ENCODE measurements at regions of chr6 and their contacts with region 1.

Region 1: DNA sequence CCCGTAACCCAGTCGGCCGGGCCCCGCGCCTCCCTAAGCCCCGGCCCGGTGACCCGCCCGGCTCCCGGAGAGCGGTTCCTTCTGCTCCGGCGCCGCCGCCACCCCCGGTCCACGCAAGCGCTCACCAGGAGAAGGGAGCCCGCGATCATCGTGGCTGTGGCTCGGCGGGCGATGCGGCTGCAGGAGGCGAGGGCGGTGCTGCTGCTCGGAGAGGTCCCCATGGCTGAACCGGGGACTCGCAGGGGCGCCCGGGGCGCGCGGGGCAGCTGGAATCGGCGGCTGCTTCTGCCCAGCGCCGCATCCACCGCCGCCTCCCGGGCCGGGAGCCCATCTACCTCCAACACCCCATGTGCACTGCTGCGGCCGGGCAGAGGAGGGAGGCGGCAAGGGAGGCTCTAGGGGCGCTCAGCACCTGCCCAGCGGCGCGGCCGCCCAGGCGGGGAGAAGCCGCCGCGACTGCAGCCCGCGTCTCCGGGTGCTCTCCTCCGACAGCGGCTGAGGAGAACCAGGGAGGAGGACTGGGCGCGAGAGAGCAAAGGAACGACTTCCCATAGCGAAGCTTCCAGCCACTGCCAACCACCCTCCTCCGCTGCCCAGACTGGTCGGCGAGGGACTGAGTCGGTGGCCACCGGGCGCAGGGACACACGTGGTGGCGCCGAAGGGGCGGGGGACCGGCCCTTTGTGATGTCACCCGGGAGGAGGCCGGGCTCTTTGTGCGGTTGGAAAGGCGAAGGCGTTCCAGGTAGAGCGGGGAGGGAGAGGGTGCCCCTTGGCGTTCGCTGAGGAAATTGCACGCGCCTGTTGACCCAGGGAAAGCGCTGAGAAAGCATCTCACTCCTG is at the start of gene TNFRSF21:
- DNase-seq: peak; percentile 36 to 81 (median 70)
- ATAC-seq: peak; percentile 92
- H3K4me3 ChIP-seq: peak within 1 kb of the TSS; percentile 48 to 76
- H3K4me3 Mint-ChIP-seq: peak within 1 kb of the TSS; percentile 80
- H3K27ac ChIP-seq: no peak within 1 kb of the TSS
- H3K27ac Mint-ChIP-seq: no peak within 1 kb of the TSS
- H3K4me1 ChIP-seq: peaks cover 6% of the 10 kb centered on the region
- H3K4me1 Mint-ChIP-seq: peaks cover 10% of the 10 kb centered on the region
- H3K27me3 ChIP-seq: peaks cover 7 to 10% of the 10 kb centered on the region in 2 experiments
- H3K27me3 Mint-ChIP-seq: peaks cover 44% of the 10 kb centered on the region
- CTCF ChIP-seq: peak; percentile 64
- total RNA-seq, gene TNFRSF21: 0.42 to 0.52 TPM

Region 2: GRCh38 chr6:46419576-46420002 is 889.9 kb before region 1 on chr6:
- CTCF ChIA-PET with region 1: no interaction called
- POLR2A ChIA-PET with region 1: no interaction called
- intact Hi-C with region 1: loop called in 1 of 2 experiments (anchors 5 kb)
- DNase-seq: peak in 2 of 9 experiments; percentile 30 to 46
- ATAC-seq: no peak
- H3K4me3 ChIP-seq: no peak overlapping the region
- H3K4me3 Mint-ChIP-seq: no peak overlapping the region
- H3K27ac ChIP-seq: no peak overlapping the region
- H3K27ac Mint-ChIP-seq: no peak overlapping the region
- H3K4me1 ChIP-seq: no peaks in the 10 kb centered on the region
- H3K4me1 Mint-ChIP-seq: no peaks in the 10 kb centered on the region
- H3K27me3 ChIP-seq: no peaks in the 10 kb centered on the region
- H3K27me3 Mint-ChIP-seq: peaks cover 19% of the 10 kb centered on the region
- CTCF ChIP-seq: peak; percentile 31

Region 3: DNA sequence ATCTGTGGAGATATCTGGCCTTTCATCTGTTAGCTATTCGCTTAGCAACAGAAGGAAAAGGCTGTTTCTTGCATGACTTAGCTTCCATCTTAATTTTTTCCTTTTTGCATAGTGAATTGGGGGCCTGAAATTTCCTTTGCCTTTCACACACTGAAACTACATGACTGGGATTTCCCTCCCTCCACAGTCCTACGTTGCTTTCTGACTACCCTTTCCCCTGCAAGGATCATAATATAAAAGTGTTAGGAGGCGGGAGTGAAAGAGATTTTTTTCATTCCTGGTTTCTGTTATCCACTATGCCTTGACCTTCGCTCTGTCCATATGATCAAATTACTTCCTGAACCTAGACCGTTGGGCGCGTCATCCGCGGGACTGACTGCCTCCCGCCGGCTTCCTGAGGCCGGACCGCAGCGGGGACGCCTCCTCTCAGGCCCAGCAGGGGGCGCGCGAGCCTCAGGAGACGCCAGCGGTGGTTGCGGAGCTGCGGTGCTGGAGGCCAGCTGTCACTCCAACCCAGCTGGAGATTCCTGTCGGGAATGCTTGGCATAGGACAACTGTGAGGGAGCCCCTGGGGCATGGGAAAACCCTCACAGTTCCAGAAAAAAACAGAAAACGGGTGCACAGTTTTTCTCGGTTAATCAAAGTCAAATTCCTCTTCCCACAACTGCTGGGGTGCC is 460.7 kb before region 1 on chr6:
- CTCF ChIA-PET with region 1: no interaction called
- POLR2A ChIA-PET with region 1: no interaction called
- intact Hi-C with region 1: loop called in 1 of 2 experiments (anchors 1 kb)
- DNase-seq: peak in 8 of 9 experiments; percentile 22 to 70 (median 56)
- ATAC-seq: no peak
- H3K4me3 ChIP-seq: no peak overlapping the region
- H3K4me3 Mint-ChIP-seq: peak overlapping the region; percentile 56
- H3K27ac ChIP-seq: no peak overlapping the region
- H3K27ac Mint-ChIP-seq: no peak overlapping the region
- H3K4me1 ChIP-seq: no peaks in the 10 kb centered on the region
- H3K4me1 Mint-ChIP-seq: peaks cover 4% of the 10 kb centered on the region
- H3K27me3 ChIP-seq: peaks cover 0 to 2% of the 10 kb centered on the region in 2 experiments
- H3K27me3 Mint-ChIP-seq: peaks cover 22% of the 10 kb centered on the region
- CTCF ChIP-seq: peak; percentile 67

Region 4: DNA sequence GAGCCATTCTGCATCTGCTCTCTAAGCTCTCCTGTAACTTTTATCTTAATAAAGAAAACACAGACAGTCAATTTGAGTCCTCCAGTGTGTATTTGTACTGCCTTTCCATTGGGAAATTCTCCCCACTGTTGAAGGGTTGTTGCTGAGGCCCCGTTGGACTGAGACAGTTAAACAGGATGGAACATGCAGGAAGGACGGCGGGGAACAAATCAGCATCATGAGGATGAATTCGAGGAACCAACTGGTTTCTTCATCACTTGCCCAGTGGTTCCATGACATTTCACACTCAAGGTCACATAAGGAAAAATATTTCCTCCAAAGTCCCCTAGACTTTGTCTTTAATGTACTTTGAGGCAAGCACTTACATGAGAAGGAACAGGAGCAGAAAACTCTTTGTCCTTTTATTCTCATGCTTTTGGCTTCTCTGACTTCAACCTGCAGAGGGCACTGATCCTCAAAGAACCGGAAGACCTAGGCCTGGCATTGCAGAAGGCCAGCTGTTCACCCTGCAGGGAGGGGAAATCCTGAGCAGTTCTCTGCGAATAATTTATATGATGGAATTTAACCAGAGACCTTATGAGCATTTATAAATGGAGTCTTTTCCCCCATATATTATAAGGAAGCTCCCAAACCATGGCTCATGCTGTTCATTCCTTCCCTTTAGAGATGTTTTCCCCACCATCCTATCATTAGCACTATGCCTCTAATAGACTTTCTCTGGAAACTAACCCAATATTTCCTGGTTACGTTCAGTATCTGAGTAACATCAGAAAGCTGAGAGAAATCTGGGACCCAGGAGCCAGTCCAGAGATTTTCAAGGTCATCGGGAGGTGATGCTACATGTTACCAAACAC is 212.2 kb before region 1 on chr6:
- CTCF ChIA-PET with region 1: interaction called, 8 read pairs
- POLR2A ChIA-PET with region 1: no interaction called
- intact Hi-C with region 1: loop called in 1 of 2 experiments (anchors 1 kb)
- DNase-seq: peak in 6 of 9 experiments; percentile 21 to 65 (median 38)
- ATAC-seq: peak; percentile 56
- H3K4me3 ChIP-seq: no peak overlapping the region
- H3K4me3 Mint-ChIP-seq: no peak overlapping the region
- H3K27ac ChIP-seq: no peak overlapping the region
- H3K27ac Mint-ChIP-seq: no peak overlapping the region
- H3K4me1 ChIP-seq: no peaks in the 10 kb centered on the region
- H3K4me1 Mint-ChIP-seq: no peaks in the 10 kb centered on the region
- H3K27me3 ChIP-seq: no peaks in the 10 kb centered on the region
- H3K27me3 Mint-ChIP-seq: peaks cover 2% of the 10 kb centered on the region
- CTCF ChIP-seq: no peak

Region 5: DNA sequence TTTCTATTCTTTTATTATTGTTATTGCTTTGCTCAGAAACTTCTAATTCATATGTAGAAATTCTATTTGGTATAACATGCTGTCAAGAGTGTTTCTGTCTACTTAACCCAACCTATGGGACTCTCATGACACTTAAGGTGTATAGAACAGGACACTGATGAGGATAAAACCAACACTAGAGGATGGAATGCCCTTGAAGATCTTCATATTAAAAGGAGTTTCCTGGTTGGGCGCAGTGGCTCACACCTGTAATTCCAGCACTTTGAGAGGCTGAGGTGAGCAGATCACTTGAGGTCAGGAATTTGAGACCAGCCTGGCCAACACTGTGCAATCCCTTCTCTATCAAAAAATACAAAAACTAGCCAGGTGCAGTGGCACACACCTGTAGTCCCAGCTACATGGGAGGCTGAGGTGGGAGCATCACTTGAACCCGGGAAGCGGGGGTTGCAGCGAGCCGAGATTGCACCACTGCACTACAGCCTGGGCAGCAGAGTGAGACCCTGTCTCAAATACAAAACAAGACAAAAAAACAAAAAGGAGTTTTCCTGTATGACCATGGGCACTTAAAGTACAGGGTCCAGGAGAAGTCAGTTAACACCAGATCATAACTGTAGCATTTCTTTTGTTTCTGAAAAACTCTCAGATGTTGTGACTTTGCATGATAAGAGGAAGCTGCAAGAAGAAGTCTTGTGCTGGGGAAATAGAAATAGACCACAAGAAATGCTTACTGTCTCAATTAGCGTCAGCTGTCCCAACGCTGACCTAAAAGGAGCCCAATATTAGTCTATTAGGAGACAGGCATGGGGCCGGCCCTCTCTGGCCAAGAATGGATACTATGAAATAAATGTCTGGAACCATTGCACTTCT is 129.2 kb after region 1 on chr6:
- CTCF ChIA-PET with region 1: no interaction called
- POLR2A ChIA-PET with region 1: no interaction called
- intact Hi-C with region 1: no loop called
- DNase-seq: no peak
- ATAC-seq: no peak
- H3K4me3 ChIP-seq: no peak overlapping the region
- H3K4me3 Mint-ChIP-seq: no peak overlapping the region
- H3K27ac ChIP-seq: no peak overlapping the region
- H3K27ac Mint-ChIP-seq: no peak overlapping the region
- H3K4me1 ChIP-seq: no peaks in the 10 kb centered on the region
- H3K4me1 Mint-ChIP-seq: no peaks in the 10 kb centered on the region
- H3K27me3 ChIP-seq: no peaks in the 10 kb centered on the region
- H3K27me3 Mint-ChIP-seq: no peaks in the 10 kb centered on the region
- CTCF ChIP-seq: no peak